ENCODE measurements at regions of chr11 and their contacts with region 1.

Region 1: DNA sequence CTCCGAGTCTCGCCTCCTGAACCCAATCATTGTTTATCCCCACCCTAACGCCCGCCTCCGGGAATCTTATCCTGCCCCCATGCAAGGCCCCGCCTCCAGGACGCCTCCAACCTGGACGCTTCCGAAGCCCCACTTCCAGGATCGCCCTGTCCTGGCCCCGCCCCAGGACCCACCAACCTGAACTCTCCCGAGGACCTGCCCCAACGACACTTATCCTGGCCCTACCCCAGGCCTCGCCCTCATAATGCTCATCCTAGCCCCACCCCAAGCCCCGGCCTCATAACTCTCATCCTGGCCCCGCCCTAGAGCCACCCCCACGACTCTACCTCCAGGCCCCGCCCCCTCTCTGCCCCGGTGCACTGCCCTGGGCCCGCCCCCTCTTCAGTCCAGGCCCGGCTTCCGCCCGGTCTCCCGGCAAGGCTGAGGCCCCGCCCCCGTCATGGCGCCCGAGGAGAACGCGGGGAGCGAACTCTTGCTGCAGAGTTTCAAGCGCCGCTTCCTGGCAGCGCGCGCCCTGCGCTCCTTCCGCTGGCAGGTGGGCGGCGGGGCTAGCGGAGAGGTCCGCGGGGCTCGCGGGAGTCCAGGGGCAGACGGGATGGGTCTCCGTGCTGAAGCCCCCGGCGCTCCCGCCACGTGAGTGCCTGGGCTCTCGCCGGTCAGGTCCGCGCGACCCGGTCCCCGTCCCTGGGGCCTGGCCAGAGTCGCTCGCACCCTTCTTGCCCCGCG is 45.7 kb upstream of the DEFB108B start:
- DNase-seq: peak in 1 of 2 donors; percentile 97
- H3K4me3 ChIP-seq: peak overlapping the region; percentile 58 to 71
- H3K27ac ChIP-seq: peak overlapping the region; percentile 90 to 93
- H3K4me1 ChIP-seq: no peaks in the 10 kb centered on the region
- H3K27me3 ChIP-seq: no peaks in the 10 kb centered on the region
- CTCF ChIP-seq: no peak

Region 2: DNA sequence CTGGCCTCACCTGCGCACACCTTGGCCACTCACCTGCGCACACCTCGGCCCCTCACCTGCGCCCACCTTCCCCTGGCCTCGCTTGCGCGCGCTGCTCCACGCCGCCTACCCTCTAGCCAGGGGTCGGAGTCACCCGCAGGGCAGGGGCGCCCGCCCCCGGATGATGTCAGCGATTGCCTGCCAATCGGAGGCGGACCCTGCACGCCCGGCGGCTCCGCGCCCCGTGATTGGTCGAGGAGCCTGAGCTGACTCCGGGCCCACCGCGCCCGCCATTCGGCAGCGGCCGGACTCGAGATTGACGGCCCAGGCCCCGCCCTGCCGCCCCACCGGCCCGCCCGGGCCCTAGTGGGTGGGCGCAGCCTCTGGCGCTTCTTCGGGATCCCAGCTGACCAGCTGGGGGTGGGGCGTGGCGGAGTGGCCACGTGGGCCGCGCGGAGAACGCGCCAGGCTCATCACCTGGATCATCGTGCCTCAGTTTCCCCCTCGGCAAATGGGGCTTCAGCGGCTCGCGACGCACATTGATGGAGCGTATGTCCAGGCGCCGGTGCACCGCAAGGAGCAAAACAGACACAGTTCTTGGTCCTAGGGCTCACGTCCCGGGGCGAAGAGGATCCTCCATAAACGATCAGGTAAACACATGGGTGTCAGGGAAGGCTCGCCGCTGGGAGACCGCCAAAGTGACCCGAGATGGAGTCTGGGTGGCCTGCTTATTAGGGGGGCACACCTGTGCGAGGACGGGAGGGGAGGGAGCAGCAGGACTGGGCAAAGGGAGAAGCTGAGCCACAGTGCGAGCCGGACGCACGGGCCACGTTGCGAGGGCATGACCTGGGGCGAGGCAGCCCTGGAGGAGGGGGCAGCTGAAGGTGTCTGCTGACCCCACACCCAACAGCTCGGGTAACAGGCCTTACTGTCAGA is 338.7 kb before region 1 on chr11 and contains the start of gene DHCR7:
- intact Hi-C with region 1: loop called (anchors 10 kb)
- DNase-seq: peak; percentile 82 to 98
- H3K4me3 ChIP-seq: peak within 1 kb of the TSS; percentile 79 to 95
- H3K27ac ChIP-seq: peak within 1 kb of the TSS; percentile 75 to 79
- H3K4me1 ChIP-seq: peaks cover 3 to 20% of the 10 kb centered on the region in 2 donors
- H3K27me3 ChIP-seq: no peaks in the 10 kb centered on the region
- CTCF ChIP-seq: peak in 1 of 3 experiments; percentile 11
- total RNA-seq, gene DHCR7: 66.2 TPM

Region 3: GRCh38 chr11:71928737-71929452 is 141.6 kb after region 1 on chr11 and contains the start of gene RNF121:
- intact Hi-C with region 1: loop called (anchors 2 kb)
- DNase-seq: peak; percentile 90 to 98
- H3K4me3 ChIP-seq: peak within 1 kb of the TSS; percentile 85 to 96
- H3K27ac ChIP-seq: peak within 1 kb of the TSS; percentile 74 to 88
- H3K4me1 ChIP-seq: peaks cover 0 to 11% of the 10 kb centered on the region in 2 donors
- H3K27me3 ChIP-seq: no peaks in the 10 kb centered on the region
- CTCF ChIP-seq: no peak
- total RNA-seq, gene RNF121: 5.0 TPM

Region 4: GRCh38 chr11:71962428-71963038 is 175.3 kb after region 1 on chr11:
- intact Hi-C with region 1: no loop called
- DNase-seq: no peak
- H3K4me3 ChIP-seq: no peak overlapping the region
- H3K27ac ChIP-seq: peak overlapping the region; percentile 4 to 24
- H3K4me1 ChIP-seq: no peaks in the 10 kb centered on the region
- H3K27me3 ChIP-seq: no peaks in the 10 kb centered on the region
- CTCF ChIP-seq: no peak

Region 5: DNA sequence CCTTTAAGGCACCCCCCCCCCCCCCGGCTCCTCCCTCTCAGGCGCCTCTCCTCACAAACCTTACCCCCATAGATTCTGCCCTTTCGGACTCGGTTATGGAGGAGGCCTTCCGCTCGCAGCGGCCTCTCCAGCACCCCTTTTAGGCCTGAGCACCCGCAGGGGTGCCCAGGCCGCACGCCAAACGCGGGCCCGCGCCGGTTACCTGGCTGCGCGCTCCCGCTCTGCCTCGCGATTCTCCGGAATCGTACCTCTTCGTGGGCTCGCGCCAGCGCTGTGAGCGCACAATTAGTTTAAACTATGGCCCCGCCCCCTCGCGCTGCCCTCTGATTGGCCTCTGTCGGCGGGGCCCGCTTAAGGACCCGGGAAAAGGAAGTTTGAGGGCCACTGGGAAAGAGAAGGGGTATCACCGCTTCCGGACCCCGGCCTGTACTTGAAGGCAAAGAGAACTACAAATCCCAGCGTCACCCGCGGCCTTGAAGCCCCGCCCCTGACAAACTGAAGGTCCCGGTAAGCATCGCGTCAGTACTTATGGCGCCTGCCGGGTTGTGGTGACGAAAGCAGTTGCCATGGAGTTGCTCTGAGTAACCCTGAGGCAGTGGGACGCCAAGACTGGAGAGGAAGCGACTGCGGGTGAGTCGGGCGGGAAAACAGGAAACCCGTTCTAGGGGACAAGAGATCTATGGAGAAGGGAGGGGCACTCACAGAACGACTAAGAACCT is 293.2 kb after region 1 on chr11 and contains the starts of genes LRRC51 and NUMA1:
- intact Hi-C with region 1: no loop called
- DNase-seq: peak; percentile 100
- H3K4me3 ChIP-seq: peak within 1 kb of the TSS; percentile 82 to 90
- H3K27ac ChIP-seq: peak within 1 kb of the TSS; percentile 89 to 91
- H3K4me1 ChIP-seq: peaks cover 5 to 14% of the 10 kb centered on the region in 2 donors
- H3K27me3 ChIP-seq: no peaks in the 10 kb centered on the region
- CTCF ChIP-seq: no peak
- total RNA-seq, gene LRRC51: 12.9 TPM
- total RNA-seq, gene NUMA1: 289 TPM

Region 6: DNA sequence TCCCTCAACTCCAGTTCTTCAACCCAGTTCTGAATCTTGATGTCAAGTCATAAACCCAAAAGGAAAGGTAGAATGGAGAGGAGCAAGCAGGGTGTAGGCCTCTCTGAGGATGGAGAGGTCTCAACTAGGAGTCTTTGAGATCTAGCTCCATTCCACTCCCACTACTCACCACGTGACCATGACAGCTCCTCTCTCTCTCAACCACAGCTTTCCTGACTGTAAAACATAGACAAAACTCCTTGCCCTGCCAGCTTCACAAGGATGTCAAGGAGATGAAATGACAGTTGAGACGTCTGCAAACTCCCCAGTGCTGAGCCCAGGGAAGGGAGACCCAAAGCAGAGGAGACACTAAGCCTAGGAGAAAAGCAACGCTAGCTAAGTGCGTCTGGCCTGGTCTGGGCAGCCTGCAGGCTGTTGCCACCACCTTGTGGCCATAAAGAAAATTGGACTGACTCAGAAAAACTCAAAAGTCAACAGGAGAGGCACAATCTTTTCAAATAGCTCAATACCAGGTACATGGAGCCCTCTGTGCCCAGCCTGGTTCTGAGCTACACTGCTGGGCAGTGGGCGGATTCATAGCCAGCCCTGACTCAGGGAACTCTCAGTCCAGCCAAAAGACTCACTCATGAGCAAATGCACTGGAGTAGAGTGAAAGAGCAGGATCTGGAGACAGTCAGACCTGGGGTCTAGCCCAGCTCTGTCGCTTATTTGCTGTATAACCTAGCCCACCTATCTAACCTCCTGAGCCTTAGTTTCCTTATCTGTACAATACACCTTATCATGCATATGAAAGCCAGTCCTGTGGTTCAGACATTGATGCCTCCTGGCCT is 643.7 kb after region 1 on chr11:
- intact Hi-C with region 1: loop called (anchors 10 kb)
- DNase-seq: no peak
- H3K4me3 ChIP-seq: no peak overlapping the region
- H3K27ac ChIP-seq: no peak overlapping the region
- H3K4me1 ChIP-seq: peaks cover 0 to 13% of the 10 kb centered on the region in 2 donors
- H3K27me3 ChIP-seq: no peaks in the 10 kb centered on the region
- CTCF ChIP-seq: peak; percentile 51 to 69 (median 56)

Measured in ascending aorta (tissue), 2 donors.